Activated CD4-positive, alpha-beta memory T cell treated with anti-CD3 and anti-CD28 coated beads for 36 hours (primary cell): ENCODE measurements at regions of chr4 and their contacts with region 1.

Region 1: DNA sequence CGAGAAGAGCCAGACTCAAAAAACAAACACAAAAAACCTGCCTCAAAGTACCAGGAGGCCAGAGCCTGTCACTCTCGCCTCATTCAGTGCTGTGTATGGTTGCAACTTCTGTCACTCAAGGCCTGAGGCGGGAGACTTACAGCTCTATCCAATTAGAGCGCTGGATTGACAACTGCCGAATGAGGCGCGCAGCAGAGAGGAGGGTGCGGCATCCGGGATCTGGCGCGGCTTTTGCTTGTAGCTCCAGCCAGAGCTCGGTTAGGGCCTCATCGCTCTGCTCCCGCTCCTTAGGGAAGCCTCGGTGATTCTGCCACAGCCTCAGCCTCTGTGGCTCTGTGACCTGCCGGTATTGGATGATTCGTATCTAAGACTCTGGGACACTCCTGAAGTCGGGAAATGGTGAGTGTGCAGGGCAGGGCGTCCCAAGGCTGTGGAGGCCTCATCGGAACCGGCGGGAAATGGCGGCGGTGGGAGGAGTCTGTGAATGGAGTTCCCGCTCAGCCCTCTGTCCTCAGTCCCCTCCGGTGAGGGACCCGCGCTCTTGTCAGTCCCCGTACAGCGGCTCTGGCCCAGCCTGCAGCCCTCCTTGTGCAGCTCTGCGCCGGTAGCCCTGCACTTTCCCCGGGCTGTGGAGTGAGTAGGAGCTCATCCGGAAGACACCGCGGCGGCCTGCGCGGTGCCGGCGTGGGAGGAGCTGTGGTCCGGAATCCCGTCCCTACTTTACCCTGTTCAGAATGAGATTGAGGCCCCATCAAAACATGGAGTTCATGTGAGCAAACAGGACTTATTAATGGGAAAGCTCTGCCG is at the start of gene ZNF718:
- DNase-seq: peak; percentile 96
- H3K4me3 Mint-ChIP-seq: peak within 1 kb of the TSS; percentile 96
- H3K27ac Mint-ChIP-seq: peak within 1 kb of the TSS; percentile 98
- H3K4me1 Mint-ChIP-seq: peaks cover 28% of the 10 kb centered on the region
- H3K27me3 Mint-ChIP-seq: no peaks in the 10 kb centered on the region
- total RNA-seq, gene ZNF718: 7.7 TPM

Region 2: DNA sequence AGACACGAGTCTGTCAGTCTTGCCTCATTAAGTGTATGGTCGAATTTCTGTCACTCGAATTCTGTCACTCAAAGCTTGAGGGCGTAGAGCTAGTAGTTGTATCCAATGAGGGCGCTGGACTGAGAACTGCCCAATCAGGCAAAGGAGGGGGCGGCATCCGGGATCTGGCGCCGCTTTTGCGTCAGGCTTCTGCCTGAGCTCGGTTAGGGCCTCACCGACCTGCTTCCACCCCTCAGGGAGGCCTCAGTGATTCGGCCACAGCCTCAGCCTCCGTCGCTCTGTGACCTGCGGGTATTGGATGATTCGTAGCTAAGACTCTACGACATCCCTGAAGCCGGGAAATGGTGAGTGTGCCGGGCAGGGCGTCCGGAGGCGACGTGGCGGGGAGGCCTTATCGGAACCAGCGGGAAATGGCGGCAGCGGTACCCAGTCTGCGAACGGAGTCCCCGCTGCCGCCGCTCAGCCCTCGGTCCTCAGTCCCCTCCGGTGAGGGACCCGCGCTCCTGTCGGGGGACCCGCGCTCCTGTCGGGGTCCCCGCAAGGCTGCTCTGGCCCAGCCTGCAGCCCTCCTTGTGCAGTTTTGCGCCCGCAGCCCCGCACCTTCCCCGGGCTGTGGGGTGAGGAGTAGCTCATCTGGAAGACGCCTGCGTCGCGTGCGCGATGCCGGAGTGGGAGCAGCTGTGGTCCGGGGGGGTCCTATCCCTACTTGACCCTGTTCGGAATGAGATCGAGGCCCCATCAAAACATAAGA is 88.1 kb after region 1 on chr4:
- CTCF ChIA-PET with region 1: no interaction called
- POLR2A ChIA-PET with region 1: no interaction called
- intact Hi-C with region 1: loop called (anchors 5 kb)
- DNase-seq: no peak
- H3K4me3 Mint-ChIP-seq: no peak overlapping the region
- H3K27ac Mint-ChIP-seq: no peak overlapping the region
- H3K4me1 Mint-ChIP-seq: peaks cover 25% of the 10 kb centered on the region
- H3K27me3 Mint-ChIP-seq: peaks cover 2% of the 10 kb centered on the region

Region 3: DNA sequence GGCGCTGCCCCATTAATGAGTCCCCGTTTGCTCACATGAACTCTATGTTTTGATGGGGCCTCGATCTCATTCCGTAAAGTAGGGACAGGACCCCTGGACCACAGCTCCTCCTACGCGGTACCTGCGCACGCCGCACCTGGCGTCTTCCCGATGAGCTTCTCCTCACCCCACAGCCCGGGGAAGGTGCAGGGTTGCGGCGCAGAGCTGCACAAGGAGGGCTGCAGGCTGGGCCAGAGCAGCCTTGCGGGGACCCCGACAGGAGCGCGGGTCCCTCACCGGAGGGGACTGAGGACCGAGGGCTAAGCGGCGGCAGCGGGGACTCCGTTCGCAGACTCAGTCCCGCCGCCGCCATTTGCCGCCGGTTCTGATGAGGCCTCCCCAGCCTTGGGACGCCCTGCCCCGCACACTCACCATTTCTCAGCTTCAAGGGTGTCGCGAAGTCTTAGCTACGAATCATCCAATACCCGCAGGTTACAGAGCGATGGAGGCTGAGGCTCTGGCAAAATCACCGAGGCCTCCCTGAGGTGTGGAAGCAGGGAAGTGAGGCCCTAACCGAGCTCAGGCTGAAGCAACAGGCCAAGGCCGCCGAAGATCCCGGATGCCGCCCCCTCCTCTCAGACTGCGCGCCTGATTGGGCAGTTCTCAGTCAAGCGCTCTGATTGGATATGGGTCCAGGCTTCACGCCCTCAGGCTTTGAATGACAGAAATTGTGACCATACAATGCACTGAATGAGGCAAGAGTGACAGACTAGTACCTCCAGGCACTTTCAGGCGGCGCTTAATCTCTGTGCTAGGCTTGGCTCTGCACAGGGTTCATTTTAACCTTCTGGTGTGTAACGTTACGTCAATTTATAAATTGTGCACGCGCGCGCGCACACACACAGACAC is 349.3 kb after region 1 on chr4:
- CTCF ChIA-PET with region 1: no interaction called
- POLR2A ChIA-PET with region 1: interaction called, 18 read pairs
- intact Hi-C with region 1: loop called (anchors 5 kb)
- DNase-seq: peak; percentile 96
- H3K4me3 Mint-ChIP-seq: peak overlapping the region; percentile 99
- H3K27ac Mint-ChIP-seq: peak overlapping the region; percentile 100
- H3K4me1 Mint-ChIP-seq: peaks cover 32% of the 10 kb centered on the region
- H3K27me3 Mint-ChIP-seq: no peaks in the 10 kb centered on the region

Region 4: GRCh38 chr4:498328-498904 is 373.9 kb after region 1 on chr4:
- CTCF ChIA-PET with region 1: no interaction called
- POLR2A ChIA-PET with region 1: interaction called, 3 read pairs
- intact Hi-C with region 1: loop called (anchors 5 kb)
- DNase-seq: no peak
- H3K4me3 Mint-ChIP-seq: peak overlapping the region; percentile 95
- H3K27ac Mint-ChIP-seq: peak overlapping the region; percentile 91
- H3K4me1 Mint-ChIP-seq: peaks cover 41% of the 10 kb centered on the region
- H3K27me3 Mint-ChIP-seq: no peaks in the 10 kb centered on the region